PC-3 (cell line): ENCODE measurements at regions of chr2 and their contacts with region 1.

Region 1: DNA sequence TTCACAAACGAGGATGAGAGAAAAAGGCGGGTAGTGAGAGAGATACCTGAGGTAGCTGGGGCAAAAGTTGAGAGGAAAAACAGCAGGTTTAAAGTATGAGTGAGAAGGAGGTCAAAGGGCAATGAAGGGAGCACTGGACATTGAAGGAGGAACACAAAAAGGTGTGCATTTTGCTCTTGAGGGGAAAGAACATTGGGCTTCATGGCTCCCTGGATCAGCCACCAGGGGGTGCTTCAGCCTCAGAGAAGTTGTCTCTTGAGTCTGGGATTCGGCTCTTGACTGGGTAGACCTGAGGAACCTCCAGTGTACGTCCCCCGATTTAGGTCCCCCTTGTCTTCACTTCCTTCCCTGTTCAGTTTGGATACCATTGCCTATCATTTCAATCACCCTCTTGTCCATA is 128.5 kb downstream of the RAPGEF4 start:
- DNase-seq: peak; percentile 72
- ATAC-seq: peak; percentile 55
- H3K4me3 ChIP-seq: no peak overlapping the region
- H3K27ac ChIP-seq: no peak overlapping the region
- H3K4me1 ChIP-seq: peaks cover 14% of the 10 kb centered on the region
- H3K27me3 ChIP-seq: no peaks in the 10 kb centered on the region
- CTCF ChIP-seq: peak; percentile 83

Region 2: DNA sequence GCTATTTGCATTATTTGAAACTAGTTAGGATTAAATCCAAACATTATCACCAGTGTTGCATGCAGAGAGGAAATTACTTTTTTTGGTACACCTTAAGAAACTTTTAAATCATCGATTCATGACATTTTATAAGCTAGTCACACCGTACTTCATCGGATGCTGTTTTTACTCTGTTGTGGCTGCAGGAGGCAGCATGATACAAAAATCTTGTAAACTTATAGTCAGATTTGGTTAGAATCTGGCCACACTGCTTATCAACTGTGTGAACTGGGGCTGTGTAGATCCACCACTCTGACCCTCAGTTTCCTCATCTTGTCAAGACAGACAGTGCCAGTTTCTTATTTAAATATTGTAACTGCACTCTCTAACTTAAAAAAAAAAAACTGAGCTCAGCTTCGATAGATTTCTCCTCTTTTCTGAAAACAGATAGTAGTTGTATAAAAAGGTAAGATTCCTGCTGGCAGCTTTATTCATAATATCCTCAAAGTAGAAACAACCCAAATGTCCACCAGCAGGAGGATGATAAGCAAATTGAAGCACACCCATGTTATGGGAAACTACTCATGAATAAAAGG is 50.8 kb before region 1 on chr2:
- CTCF ChIA-PET with region 1: interaction called, 20 read pairs
- POLR2A ChIA-PET with region 1: no interaction called
- intact Hi-C with region 1: loop called (anchors 2 kb)
- DNase-seq: peak; percentile 58
- ATAC-seq: peak; percentile 82
- H3K4me3 ChIP-seq: no peak overlapping the region
- H3K27ac ChIP-seq: no peak overlapping the region
- H3K4me1 ChIP-seq: no peaks in the 10 kb centered on the region
- H3K27me3 ChIP-seq: no peaks in the 10 kb centered on the region
- CTCF ChIP-seq: peak; percentile 86